CD4-positive, alpha-beta T cell (primary cell): ENCODE measurements at regions of chr2 and their contacts with region 1.

Region 1: GRCh38 chr2:173008786-173009185 is 66.9 kb upstream of the MAP3K20 start:
- DNase-seq: no peak
- ATAC-seq: no peak
- H3K4me3 ChIP-seq: no peak overlapping the region
- H3K4me3 Mint-ChIP-seq: no peak overlapping the region
- H3K27ac ChIP-seq: no peak overlapping the region
- H3K27ac Mint-ChIP-seq: no peak overlapping the region
- H3K4me1 ChIP-seq: no peaks in the 10 kb centered on the region
- H3K4me1 Mint-ChIP-seq: no peaks in the 10 kb centered on the region
- H3K27me3 ChIP-seq: no peaks in the 10 kb centered on the region
- H3K27me3 Mint-ChIP-seq: peaks cover 22% of the 10 kb centered on the region
- CTCF ChIP-seq: no peak

Region 2: GRCh38 chr2:172864182-172864581 is 144.6 kb before region 1 on chr2:
- CTCF ChIA-PET with region 1: no interaction called
- POLR2A ChIA-PET with region 1: no interaction called
- intact Hi-C with region 1: loop called in 1 of 2 experiments (anchors 5 kb)
- DNase-seq: peak in 13 of 14 experiments; percentile 3 to 65 (median 15)
- ATAC-seq: no peak
- H3K4me3 ChIP-seq: no peak overlapping the region
- H3K4me3 Mint-ChIP-seq: no peak overlapping the region
- H3K27ac ChIP-seq: no peak overlapping the region
- H3K27ac Mint-ChIP-seq: no peak overlapping the region
- H3K4me1 ChIP-seq: no peaks in the 10 kb centered on the region
- H3K4me1 Mint-ChIP-seq: no peaks in the 10 kb centered on the region
- H3K27me3 ChIP-seq: peaks cover 0 to 3% of the 10 kb centered on the region in 2 experiments
- H3K27me3 Mint-ChIP-seq: peaks cover 23% of the 10 kb centered on the region
- CTCF ChIP-seq: peak; percentile 46

Region 3: GRCh38 chr2:173184031-173185004 is 175.5 kb after region 1 on chr2:
- CTCF ChIA-PET with region 1: no interaction called
- POLR2A ChIA-PET with region 1: no interaction called
- intact Hi-C with region 1: no loop called
- DNase-seq: no peak
- ATAC-seq: no peak
- H3K4me3 ChIP-seq: no peak overlapping the region
- H3K4me3 Mint-ChIP-seq: no peak overlapping the region
- H3K27ac ChIP-seq: no peak overlapping the region
- H3K27ac Mint-ChIP-seq: no peak overlapping the region
- H3K4me1 ChIP-seq: no peaks in the 10 kb centered on the region
- H3K4me1 Mint-ChIP-seq: no peaks in the 10 kb centered on the region
- H3K27me3 ChIP-seq: no peaks in the 10 kb centered on the region
- H3K27me3 Mint-ChIP-seq: no peaks in the 10 kb centered on the region
- CTCF ChIP-seq: no peak